AG04449 (cell line): ENCODE measurements at regions of chr13 and their contacts with region 1.

Region 1: GRCh38 chr13:20828539-20829364 is 55.0 kb upstream of the EEF1AKMT1 start:
- DNase-seq: no peak
- H3K4me3 ChIP-seq: peak overlapping the region; percentile 31; the same call in 1 of the 2 replicates
- CTCF ChIP-seq: peak; percentile 62

Region 2: GRCh38 chr13:20703780-20704445 is 124.8 kb before region 1 on chr13:
- CTCF ChIA-PET with region 1: interaction called, 110 read pairs
- POLR2A ChIA-PET with region 1: no interaction called
- DNase-seq: no peak
- H3K4me3 ChIP-seq: peak overlapping the region; percentile 66
- CTCF ChIP-seq: peak; percentile 77

Region 3: DNA sequence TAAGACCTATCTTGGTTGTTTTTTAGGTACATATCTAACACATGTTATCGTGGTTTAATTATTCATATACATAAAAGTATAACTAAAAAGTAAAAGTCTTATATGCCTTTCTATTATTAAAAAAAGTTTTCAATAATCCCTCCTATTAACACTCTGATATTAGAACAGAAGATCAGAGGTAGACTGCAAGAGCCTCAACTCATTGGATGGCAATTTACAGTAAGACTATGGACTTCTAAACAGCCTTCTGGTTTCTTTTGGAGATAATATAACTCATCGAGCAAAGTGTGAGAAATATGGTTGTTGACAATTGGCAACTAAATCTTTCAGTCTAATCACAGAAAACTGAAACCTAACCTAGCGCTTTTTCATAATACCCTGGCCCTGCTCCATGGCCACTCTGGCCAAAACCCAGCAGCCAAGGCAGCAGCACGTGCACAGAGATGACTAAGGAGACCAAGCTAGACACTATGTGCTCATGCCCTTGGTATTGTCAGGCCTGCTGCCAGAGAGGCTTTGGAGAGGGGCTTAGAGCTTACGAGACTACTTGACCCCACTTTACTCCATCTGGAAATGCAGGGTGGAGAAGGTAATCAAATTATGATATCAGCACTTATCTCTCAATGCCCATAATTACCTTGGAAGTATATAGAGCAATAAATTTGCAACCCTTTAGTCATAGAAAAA is 14.4 kb before region 1 on chr13:
- CTCF ChIA-PET with region 1: interaction called, 67 read pairs
- POLR2A ChIA-PET with region 1: interaction called, 5 read pairs
- DNase-seq: peak; percentile 69
- H3K4me3 ChIP-seq: no peak overlapping the region; the same call in 1 of the 2 replicates
- CTCF ChIP-seq: no peak

Region 4: DNA sequence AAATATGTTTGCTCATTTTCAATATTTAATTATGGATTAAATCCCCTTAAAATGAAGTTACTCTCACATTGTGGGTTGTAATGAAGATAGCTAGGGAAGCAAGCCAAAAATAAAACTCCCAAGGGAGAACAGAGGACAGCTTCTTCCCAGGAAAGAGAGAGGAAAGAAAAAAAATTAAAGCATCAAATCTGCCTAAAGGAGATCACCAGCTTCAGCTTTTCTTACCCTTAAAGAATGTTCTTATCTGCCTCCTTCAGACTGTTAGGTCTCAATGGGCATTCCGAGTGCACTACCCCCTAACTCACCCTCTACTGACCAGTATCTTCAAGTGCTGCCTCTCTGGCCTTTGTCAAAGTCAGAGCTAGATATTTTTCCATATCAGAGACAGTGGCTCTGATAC is 18.5 kb after region 1 on chr13:
- CTCF ChIA-PET with region 1: interaction called, 24 read pairs
- POLR2A ChIA-PET with region 1: no interaction called
- DNase-seq: no peak
- H3K4me3 ChIP-seq: no peak overlapping the region
- CTCF ChIP-seq: no peak